ENCODE measurements at regions of chr1 and their contacts with region 1.

Region 1: GRCh38 chr1:188937965-188938551 is 1539.6 kb downstream of the BRINP3 start:
- DNase-seq: peak; percentile 53
- H3K4me3 ChIP-seq: no peak overlapping the region
- H3K27ac ChIP-seq: peak overlapping the region; percentile 23
- H3K4me1 ChIP-seq: no peaks in the 10 kb centered on the region
- H3K27me3 ChIP-seq: no peaks in the 10 kb centered on the region
- CTCF ChIP-seq: peak; percentile 35 to 41
- POLR2A ChIP-seq: no peak

Region 2: GRCh38 chr1:187051618-187052232 is 1886.3 kb before region 1 on chr1:
- CTCF ChIA-PET with region 1: interaction called, 3 read pairs
- POLR2A ChIA-PET with region 1: no interaction called
- dilution Hi-C with region 1: no loop called
- intact Hi-C with region 1: loop called (anchors 2 kb)
- DNase-seq: peak; percentile 62
- H3K4me3 ChIP-seq: no peak overlapping the region
- H3K27ac ChIP-seq: no peak overlapping the region
- H3K4me1 ChIP-seq: no peaks in the 10 kb centered on the region
- H3K27me3 ChIP-seq: no peaks in the 10 kb centered on the region
- CTCF ChIP-seq: peak; percentile 28 to 33
- POLR2A ChIP-seq: no peak

Region 3: DNA sequence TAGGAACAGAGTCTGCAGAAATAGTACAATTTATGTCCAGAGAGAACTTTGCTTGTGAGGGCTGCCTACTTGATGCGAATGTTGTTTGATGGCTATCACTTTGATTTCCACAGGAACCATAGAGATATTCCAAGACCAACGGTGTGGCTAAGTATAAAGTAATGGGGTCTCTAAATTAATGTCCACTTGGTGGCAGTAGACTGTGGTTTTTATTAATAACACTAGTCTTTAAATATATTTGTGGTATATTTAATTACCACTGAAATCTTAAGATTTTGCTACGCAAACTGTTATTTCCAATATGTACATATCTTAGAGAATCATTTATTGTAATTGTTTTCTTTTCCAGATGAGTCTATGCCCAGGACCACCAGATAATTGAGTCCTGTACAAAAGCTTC is 1461.4 kb before region 1 on chr1:
- CTCF ChIA-PET with region 1: no interaction called
- POLR2A ChIA-PET with region 1: no interaction called
- dilution Hi-C with region 1: no loop called
- intact Hi-C with region 1: loop called (anchors 5 kb)
- DNase-seq: peak; percentile 61
- H3K4me3 ChIP-seq: no peak overlapping the region
- H3K27ac ChIP-seq: no peak overlapping the region
- H3K4me1 ChIP-seq: no peaks in the 10 kb centered on the region
- H3K27me3 ChIP-seq: no peaks in the 10 kb centered on the region
- CTCF ChIP-seq: peak; percentile 8 to 19
- POLR2A ChIP-seq: no peak

Region 4: DNA sequence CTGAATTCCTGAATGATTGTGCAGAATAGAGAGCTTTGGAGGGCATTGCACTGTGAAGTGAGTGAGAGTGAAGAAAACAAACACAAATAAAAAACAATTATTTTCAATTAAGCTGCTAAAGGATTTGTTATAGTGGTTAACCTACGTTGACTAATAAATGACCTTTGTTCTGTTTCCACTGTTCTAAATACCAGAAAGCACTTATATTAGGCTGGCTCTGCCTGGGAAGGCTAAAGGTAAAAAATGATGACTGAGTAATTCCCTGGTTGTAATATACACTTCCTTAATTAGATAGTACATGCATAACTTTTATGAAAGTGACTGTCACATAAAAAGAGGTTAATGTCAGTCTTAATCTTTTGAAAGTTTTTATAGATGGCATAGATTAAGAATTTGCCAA is 448.3 kb before region 1 on chr1:
- CTCF ChIA-PET with region 1: no interaction called
- POLR2A ChIA-PET with region 1: no interaction called
- dilution Hi-C with region 1: no loop called
- intact Hi-C with region 1: loop called (anchors 10 kb)
- DNase-seq: no peak
- H3K4me3 ChIP-seq: no peak overlapping the region
- H3K27ac ChIP-seq: no peak overlapping the region
- H3K4me1 ChIP-seq: peaks cover 5% of the 10 kb centered on the region
- H3K27me3 ChIP-seq: no peaks in the 10 kb centered on the region
- CTCF ChIP-seq: no peak
- POLR2A ChIP-seq: no peak

Region 5: DNA sequence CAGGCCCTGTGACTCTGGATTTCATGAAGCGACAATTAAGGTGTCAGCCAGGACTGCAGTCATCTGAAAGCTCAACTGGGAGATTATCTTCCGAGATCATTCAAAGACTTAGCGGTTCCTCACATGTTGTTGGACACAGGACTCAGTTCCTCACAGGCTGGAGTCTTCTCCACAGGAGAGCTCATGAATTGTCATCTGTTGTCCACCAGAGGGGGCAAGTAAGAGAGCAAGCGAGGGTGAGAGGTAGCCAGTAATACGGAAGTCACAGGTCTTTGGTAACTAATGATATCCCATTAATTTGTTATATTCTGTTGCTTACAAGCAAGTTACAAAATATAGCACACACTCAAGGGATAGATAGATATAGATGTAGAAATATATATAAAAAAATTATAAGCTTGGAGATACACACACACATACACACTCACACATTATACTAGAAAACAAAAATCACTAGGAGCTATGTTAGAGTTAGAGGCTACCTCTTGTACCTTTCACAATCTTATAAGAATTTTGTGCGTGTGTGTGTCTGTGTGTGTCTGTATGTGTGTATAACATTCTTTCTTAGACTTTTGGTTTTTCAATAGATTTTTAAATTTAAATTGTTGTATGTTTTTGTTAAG is 155.7 kb before region 1 on chr1:
- CTCF ChIA-PET with region 1: interaction called, 11 read pairs
- POLR2A ChIA-PET with region 1: no interaction called
- dilution Hi-C with region 1: no loop called
- intact Hi-C with region 1: no loop called
- DNase-seq: peak; percentile 31
- H3K4me3 ChIP-seq: no peak overlapping the region
- H3K27ac ChIP-seq: no peak overlapping the region
- H3K4me1 ChIP-seq: no peaks in the 10 kb centered on the region
- H3K27me3 ChIP-seq: no peaks in the 10 kb centered on the region
- CTCF ChIP-seq: peak; percentile 39 to 44
- POLR2A ChIP-seq: no peak

Region 6: GRCh38 chr1:188867614-188868013 is 70.4 kb before region 1 on chr1:
- CTCF ChIA-PET with region 1: no interaction called
- POLR2A ChIA-PET with region 1: no interaction called
- dilution Hi-C with region 1: no loop called
- intact Hi-C with region 1: no loop called
- DNase-seq: no peak
- H3K4me3 ChIP-seq: no peak overlapping the region
- H3K27ac ChIP-seq: no peak overlapping the region
- H3K4me1 ChIP-seq: no peaks in the 10 kb centered on the region
- H3K27me3 ChIP-seq: no peaks in the 10 kb centered on the region
- CTCF ChIP-seq: no peak
- POLR2A ChIP-seq: no peak

Region 7: GRCh38 chr1:188888387-188888786 is 49.7 kb before region 1 on chr1:
- CTCF ChIA-PET with region 1: no interaction called
- POLR2A ChIA-PET with region 1: no interaction called
- dilution Hi-C with region 1: no loop called
- intact Hi-C with region 1: no loop called
- DNase-seq: no peak
- H3K4me3 ChIP-seq: no peak overlapping the region
- H3K27ac ChIP-seq: no peak overlapping the region
- H3K4me1 ChIP-seq: no peaks in the 10 kb centered on the region
- H3K27me3 ChIP-seq: no peaks in the 10 kb centered on the region
- CTCF ChIP-seq: no peak
- POLR2A ChIP-seq: no peak

Region 8: GRCh38 chr1:188906921-188907641 is 31.0 kb before region 1 on chr1:
- CTCF ChIA-PET with region 1: no interaction called
- POLR2A ChIA-PET with region 1: no interaction called
- dilution Hi-C with region 1: no loop called
- intact Hi-C with region 1: no loop called
- DNase-seq: no peak
- H3K4me3 ChIP-seq: no peak overlapping the region
- H3K27ac ChIP-seq: no peak overlapping the region
- H3K4me1 ChIP-seq: no peaks in the 10 kb centered on the region
- H3K27me3 ChIP-seq: no peaks in the 10 kb centered on the region
- CTCF ChIP-seq: no peak
- POLR2A ChIP-seq: no peak

Measured in endothelial cell of umbilical vein (primary cell).